ENCODE measurements at regions of chr2 and their contacts with region 1.

Region 1: DNA sequence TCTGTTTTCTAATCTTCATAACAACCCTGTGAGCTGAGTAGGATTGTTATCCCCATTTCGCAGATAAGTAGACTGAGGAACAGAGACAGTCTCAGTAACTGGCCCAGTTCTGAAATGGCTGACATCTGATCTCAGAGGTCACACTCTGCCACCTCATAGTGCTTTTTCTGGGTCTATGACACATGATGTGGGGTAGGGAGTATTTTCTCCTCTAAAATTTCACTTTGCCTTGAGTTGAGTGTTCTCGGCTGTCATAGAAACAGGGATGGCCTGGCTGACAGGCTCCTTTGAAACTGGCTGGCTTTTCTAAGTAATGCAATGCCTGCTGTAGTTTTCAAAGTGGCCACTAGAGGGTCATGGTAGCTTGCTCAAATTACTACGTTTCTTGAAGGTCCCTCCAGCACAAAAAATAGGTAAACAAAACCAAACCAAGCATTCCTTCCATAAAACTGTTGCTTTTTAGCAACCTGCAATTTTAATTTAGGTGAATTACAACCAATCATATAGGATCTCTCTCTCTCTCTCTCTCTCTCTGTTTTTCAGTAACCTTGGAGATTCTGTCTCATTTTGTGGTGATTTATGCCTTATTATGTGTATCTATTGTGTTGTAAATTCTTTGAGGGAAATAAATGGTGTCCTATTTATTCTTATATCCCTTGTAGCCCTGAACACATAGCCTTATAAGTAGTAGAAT is 84.2 kb upstream of the TTN start:
- DNase-seq: peak; percentile 90
- ATAC-seq: peak; percentile 84
- H3K4me3 ChIP-seq: no peak overlapping the region
- H3K27ac ChIP-seq: no peak overlapping the region
- H3K4me1 ChIP-seq: peaks cover 10% of the 10 kb centered on the region; the same call in 1 of the 2 replicates
- H3K27me3 ChIP-seq: no peaks in the 10 kb centered on the region
- CTCF ChIP-seq: peak; percentile 92

Region 2: GRCh38 chr2:178830451-178830850 is 61.0 kb before region 1 on chr2:
- CTCF ChIA-PET with region 1: no interaction called
- POLR2A ChIA-PET with region 1: no interaction called
- intact Hi-C with region 1: loop called (anchors 2 kb)
- DNase-seq: peak; percentile 49
- ATAC-seq: peak; percentile 77
- H3K4me3 ChIP-seq: no peak overlapping the region; the same call in 1 of the 2 replicates
- H3K27ac ChIP-seq: peak overlapping the region; percentile 68
- H3K4me1 ChIP-seq: peaks cover 23% of the 10 kb centered on the region
- H3K27me3 ChIP-seq: no peaks in the 10 kb centered on the region
- CTCF ChIP-seq: no peak

Region 3: GRCh38 chr2:178914259-178914849 is 22.9 kb after region 1 on chr2:
- CTCF ChIA-PET with region 1: interaction called, 5 read pairs
- POLR2A ChIA-PET with region 1: no interaction called
- intact Hi-C with region 1: loop called (anchors 1 kb)
- DNase-seq: peak; percentile 92
- ATAC-seq: peak; percentile 59
- H3K4me3 ChIP-seq: no peak overlapping the region
- H3K27ac ChIP-seq: no peak overlapping the region
- H3K4me1 ChIP-seq: peaks cover 52% of the 10 kb centered on the region
- H3K27me3 ChIP-seq: no peaks in the 10 kb centered on the region
- CTCF ChIP-seq: peak; percentile 94

Measured in PC-3 (cell line).